Adrenal gland (tissue), 19 donors: ENCODE measurements at regions of chr14 and their contacts with region 1.

Region 1: DNA sequence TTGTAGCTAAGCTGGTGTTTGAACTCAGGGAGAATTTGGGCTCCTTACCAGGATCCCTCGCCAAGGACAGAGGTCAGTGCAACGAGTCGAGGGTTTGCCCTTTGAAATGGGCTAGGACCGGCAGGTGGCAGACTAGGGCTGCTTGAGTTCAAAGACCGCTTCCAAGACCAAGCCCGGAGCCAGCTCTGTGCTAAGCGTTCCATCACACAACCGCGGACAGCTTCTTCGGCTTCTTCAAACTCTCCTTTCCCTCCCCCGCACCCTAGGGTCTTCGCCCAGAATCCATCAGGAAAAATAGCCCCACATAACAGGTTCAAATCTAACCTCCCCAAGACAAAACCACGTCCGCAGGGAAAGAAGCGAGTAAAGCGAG is 705 bp upstream of the FLVCR2 start:
- DNase-seq: peak; percentile 88 to 96 (median 94)
- H3K4me3 ChIP-seq: peak overlapping the region in 3 of 4 donors; percentile 22 to 57 (median 44)
- H3K27ac ChIP-seq: peak overlapping the region; percentile 34 to 90 (median 78)
- H3K4me1 ChIP-seq: peaks cover 6 to 18% of the 10 kb centered on the region in 2 donors
- H3K27me3 ChIP-seq: no peaks in the 10 kb centered on the region
- CTCF ChIP-seq: peak; percentile 48 to 85 (median 78)
- POLR2A ChIP-seq: no peak

Region 2: GRCh38 chr14:75510547-75510946 is 67.2 kb before region 1 on chr14:
- intact Hi-C with region 1: no loop called
- DNase-seq: no peak
- H3K4me3 ChIP-seq: no peak overlapping the region
- H3K27ac ChIP-seq: no peak overlapping the region
- H3K4me1 ChIP-seq: no peaks in the 10 kb centered on the region
- H3K27me3 ChIP-seq: no peaks in the 10 kb centered on the region
- CTCF ChIP-seq: no peak
- POLR2A ChIP-seq: no peak

Region 3: GRCh38 chr14:75636100-75636692 is 58.5 kb after region 1 on chr14:
- intact Hi-C with region 1: loop called in 1 of 2 experiments (anchors 10 kb)
- DNase-seq: peak in 6 of 7 donors; percentile 38 to 79 (median 53)
- H3K4me3 ChIP-seq: no peak overlapping the region
- H3K27ac ChIP-seq: peak overlapping the region in 3 of 5 donors; percentile 33 to 84 (median 72)
- H3K4me1 ChIP-seq: peaks cover 4 to 11% of the 10 kb centered on the region in 2 donors
- H3K27me3 ChIP-seq: no peaks in the 10 kb centered on the region
- CTCF ChIP-seq: no peak
- POLR2A ChIP-seq: no peak

Region 4: DNA sequence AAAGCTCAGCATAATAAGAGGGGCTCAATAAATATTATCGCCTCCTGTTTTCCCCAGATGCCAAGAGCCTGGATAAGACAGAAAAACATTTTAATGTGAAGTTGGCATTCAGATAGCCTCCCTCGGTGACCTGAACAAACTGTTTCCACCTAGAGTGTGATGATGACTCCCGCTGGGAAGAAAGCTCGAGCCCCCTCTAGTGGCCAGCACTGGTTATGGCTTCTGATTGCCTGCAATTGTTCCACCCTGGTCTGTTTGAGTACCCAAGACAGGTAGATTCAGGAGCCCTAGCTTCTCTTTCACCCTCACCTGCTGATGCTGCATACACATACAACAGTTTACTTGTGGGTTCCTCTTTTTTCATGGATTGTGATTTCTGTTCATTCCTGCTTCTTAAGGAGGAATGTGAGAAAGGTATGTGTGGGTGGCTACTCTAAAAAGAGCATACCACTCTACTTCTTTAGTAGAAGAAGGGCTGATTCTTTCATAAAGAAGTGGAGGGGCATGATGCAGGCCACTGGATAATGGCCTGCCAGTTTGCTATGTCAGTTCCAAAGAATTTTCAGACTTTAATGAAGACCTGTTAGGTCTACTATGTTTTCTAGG is 76.5 kb after region 1 on chr14:
- intact Hi-C with region 1: loop called (anchors 2 to 5 kb)
- DNase-seq: peak; percentile 76 to 95 (median 86)
- H3K4me3 ChIP-seq: no peak overlapping the region
- H3K27ac ChIP-seq: no peak overlapping the region
- H3K4me1 ChIP-seq: peaks cover 8 to 37% of the 10 kb centered on the region in 2 donors
- H3K27me3 ChIP-seq: no peaks in the 10 kb centered on the region
- CTCF ChIP-seq: peak; percentile 85 to 97 (median 95)
- POLR2A ChIP-seq: no peak